Activated CD8-positive, alpha-beta memory T cell treated with anti-CD3 and anti-CD28 coated beads, Interleukin-2, amount 10 ng/mL, durations not matched to agents 7 days and 5 days (primary cell): ENCODE measurements at regions of chr16 and their contacts with region 1.

Region 1: DNA sequence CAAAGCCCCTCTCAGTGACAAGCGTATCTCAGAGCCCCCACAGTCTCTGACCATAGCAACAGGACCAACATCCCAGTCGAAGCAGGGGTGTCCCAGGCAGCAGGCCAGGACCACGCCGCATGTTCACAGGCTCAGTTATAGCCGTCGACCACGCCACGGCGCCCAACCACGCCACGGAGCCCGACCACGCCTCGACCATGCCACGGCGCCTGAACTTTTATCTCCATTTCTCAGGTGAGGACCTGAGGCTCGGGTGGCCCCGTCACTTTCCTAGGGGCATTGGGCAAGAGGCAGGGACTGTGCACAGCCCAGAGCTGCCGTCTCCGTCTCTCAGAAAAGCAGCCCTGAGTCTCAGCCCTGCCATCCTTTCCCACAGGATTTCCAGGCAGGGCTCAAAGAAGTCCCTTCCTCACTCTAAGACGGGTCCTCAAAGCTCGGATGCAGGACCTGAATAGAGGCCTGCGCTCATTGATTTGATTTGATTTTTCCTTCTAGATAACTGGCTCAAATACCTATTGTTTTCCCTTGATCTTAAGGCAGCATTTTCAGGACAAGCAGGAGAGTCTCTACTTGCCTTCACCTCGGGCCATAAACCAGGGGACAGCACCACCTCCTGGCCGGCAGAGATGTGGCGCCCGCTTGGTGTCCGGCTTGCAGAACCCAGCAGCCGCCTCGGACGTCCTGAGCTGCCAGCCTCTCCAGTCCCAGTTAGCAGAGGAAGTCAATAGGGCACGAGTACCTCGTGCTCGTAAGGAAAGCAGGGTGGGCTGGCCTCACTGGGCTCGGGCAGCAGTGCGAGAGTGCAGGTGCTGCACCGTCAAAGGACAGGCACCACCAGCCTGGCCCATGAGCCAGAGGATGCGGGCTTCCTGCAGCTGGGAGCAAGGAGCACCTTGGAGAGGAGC is 38.7 kb downstream of the C16orf95 start:
- DNase-seq: peak; percentile 75
- ATAC-seq: peak; percentile 86
- H3K4me3 Mint-ChIP-seq: no peak overlapping the region
- H3K27ac Mint-ChIP-seq: no peak overlapping the region
- H3K4me1 Mint-ChIP-seq: peaks cover 26% of the 10 kb centered on the region
- H3K27me3 Mint-ChIP-seq: peaks cover 2% of the 10 kb centered on the region

Region 2: DNA sequence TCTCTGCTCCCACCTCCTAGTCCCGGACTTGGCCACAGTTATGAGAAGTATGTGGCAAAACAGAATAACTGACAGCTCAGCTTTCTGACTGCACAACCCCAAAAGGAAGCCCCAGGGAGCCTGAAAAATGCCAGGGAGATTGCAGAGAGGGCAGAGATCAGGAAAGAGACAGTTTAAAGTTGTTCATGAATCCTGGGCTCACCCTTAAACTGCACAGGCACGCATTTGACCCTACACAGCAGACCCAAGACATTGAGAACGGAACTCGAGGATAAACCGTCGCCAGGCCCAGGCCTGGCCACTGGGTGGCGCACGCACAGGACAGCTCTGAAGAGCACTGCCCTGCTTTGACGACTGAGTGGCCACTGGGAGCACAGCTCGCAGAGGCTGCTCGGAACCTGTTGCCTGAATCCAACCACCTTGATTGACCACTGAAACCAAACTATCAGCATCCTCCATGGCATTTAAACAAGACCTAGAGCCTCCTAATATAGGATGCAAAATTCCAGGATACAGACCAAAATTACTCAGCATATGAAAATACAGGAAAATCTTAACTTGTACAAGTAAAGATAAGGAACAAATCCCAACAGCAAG is 75.3 kb before region 1 on chr16:
- CTCF ChIA-PET with region 1: interaction called, 42 read pairs
- DNase-seq: peak; percentile 67
- ATAC-seq: peak; percentile 85
- H3K4me3 Mint-ChIP-seq: no peak overlapping the region
- H3K27ac Mint-ChIP-seq: no peak overlapping the region
- H3K4me1 Mint-ChIP-seq: peaks cover 2% of the 10 kb centered on the region
- H3K27me3 Mint-ChIP-seq: peaks cover 13% of the 10 kb centered on the region